Caco-2 (cell line): ENCODE measurements at regions of chr13 and their contacts with region 1.

Region 1: GRCh38 chr13:73708393-73708985 is 425.7 kb downstream of the KLF12 start:
- DNase-seq: peak; percentile 65 to 75
- H3K4me3 ChIP-seq: no peak overlapping the region
- H3K4me3 Mint-ChIP-seq: no peak overlapping the region
- H3K27ac Mint-ChIP-seq: no peak overlapping the region
- H3K4me1 ChIP-seq: no peaks in the 10 kb centered on the region
- H3K4me1 Mint-ChIP-seq: no peaks in the 10 kb centered on the region
- H3K27me3 ChIP-seq: no peaks in the 10 kb centered on the region
- H3K27me3 Mint-ChIP-seq: no peaks in the 10 kb centered on the region
- CTCF ChIP-seq: peak; percentile 82 to 94

Region 2: DNA sequence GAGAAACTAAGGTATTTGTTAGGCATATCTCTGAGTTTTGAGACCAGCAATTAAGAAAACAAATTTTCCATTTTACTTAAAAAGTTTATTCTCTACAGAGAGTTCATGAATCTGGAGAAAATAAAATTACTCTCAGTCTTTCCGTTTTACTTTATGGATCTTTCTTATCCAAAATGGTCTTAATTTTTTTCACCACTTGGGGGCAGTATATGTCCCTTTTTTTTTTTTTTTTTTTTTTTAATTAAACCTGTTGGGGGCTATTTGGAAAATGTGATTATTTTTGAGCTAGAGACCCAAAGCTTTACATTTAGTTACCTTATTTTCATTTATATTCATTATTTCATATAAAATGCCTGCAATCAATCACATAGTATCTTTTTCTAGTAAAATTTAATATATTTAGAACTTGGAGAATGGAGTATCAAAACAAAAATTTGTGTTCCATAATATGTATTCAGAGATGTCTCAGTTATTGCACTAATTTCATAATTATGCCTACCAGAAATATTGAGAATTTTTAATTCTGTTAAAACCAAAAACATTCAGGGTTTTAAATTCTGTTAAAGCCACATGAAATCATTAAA is 899.5 kb before region 1 on chr13:
- CTCF ChIA-PET with region 1: no interaction called
- POLR2A ChIA-PET with region 1: no interaction called
- intact Hi-C with region 1: loop called (anchors 1 kb)
- DNase-seq: no peak
- H3K4me3 ChIP-seq: no peak overlapping the region
- H3K4me3 Mint-ChIP-seq: no peak overlapping the region
- H3K27ac Mint-ChIP-seq: no peak overlapping the region
- H3K4me1 ChIP-seq: peaks cover 16% of the 10 kb centered on the region
- H3K4me1 Mint-ChIP-seq: peaks cover 7% of the 10 kb centered on the region
- H3K27me3 ChIP-seq: no peaks in the 10 kb centered on the region
- H3K27me3 Mint-ChIP-seq: no peaks in the 10 kb centered on the region
- CTCF ChIP-seq: peak; percentile 50 to 66

Region 3: DNA sequence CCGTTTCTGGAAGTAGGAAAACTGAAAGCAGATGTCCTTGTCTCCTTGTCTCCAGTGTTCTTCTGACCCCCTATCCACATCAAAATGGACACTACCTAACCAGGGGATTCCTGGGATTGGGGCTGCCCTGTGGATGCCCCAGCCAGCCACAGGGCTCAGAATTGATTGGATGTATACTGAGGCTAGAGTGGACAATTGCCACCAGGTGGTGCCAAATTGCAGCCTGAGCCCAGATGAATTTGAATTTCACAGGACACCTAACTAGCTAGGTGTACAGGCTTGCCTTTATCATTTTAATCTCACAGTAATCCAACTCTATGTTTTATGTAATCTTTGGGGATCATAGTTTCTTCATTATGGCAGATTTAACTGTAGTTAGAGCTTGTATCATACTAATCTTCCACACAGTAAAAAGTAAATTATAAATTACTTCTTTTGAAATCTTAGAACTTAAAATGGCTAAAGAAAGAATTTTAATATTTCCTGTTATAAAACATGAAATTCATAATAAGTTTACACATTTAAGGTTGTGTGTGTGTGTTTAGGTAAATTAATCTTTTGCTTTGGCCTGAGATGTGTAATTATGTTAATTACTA is 868.6 kb before region 1 on chr13:
- CTCF ChIA-PET with region 1: no interaction called
- POLR2A ChIA-PET with region 1: no interaction called
- intact Hi-C with region 1: loop called (anchors 1 kb)
- DNase-seq: peak; percentile 77 to 80
- H3K4me3 ChIP-seq: no peak overlapping the region
- H3K4me3 Mint-ChIP-seq: no peak overlapping the region
- H3K27ac Mint-ChIP-seq: no peak overlapping the region
- H3K4me1 ChIP-seq: no peaks in the 10 kb centered on the region; the same call in 1 of the 2 replicates
- H3K4me1 Mint-ChIP-seq: no peaks in the 10 kb centered on the region
- H3K27me3 ChIP-seq: no peaks in the 10 kb centered on the region
- H3K27me3 Mint-ChIP-seq: no peaks in the 10 kb centered on the region
- CTCF ChIP-seq: peak; percentile 89 to 90

Region 4: DNA sequence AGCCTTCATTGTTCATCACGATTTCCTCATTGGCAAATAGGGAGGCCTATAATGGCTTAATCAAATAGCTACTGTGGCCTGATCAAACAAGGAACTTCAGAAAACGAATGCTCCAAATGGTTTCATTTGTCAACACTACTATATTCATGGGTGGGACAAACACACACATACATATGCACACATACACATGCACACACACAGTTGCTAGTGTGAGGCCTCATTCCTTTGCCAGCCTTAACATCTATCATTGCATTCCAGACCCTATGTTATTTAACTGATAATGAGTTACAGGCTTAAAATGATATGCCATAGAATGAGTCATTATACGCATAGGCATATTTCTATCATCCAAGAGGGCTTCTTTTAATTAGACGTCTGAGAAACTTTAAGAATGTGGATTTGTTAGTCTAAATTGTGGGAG is 509.5 kb before region 1 on chr13:
- CTCF ChIA-PET with region 1: no interaction called
- POLR2A ChIA-PET with region 1: no interaction called
- intact Hi-C with region 1: loop called (anchors 10 kb)
- DNase-seq: no peak
- H3K4me3 ChIP-seq: no peak overlapping the region
- H3K4me3 Mint-ChIP-seq: no peak overlapping the region
- H3K27ac Mint-ChIP-seq: no peak overlapping the region
- H3K4me1 ChIP-seq: peaks cover 27% of the 10 kb centered on the region
- H3K4me1 Mint-ChIP-seq: peaks cover 11% of the 10 kb centered on the region
- H3K27me3 ChIP-seq: no peaks in the 10 kb centered on the region
- H3K27me3 Mint-ChIP-seq: no peaks in the 10 kb centered on the region
- CTCF ChIP-seq: no peak

Region 5: GRCh38 chr13:73223372-73223781 is 485.1 kb before region 1 on chr13:
- CTCF ChIA-PET with region 1: no interaction called
- POLR2A ChIA-PET with region 1: no interaction called
- intact Hi-C with region 1: loop called (anchors 10 kb)
- DNase-seq: peak in 1 of 2 experiments; percentile 12
- H3K4me3 ChIP-seq: no peak overlapping the region
- H3K4me3 Mint-ChIP-seq: no peak overlapping the region
- H3K27ac Mint-ChIP-seq: peak overlapping the region; percentile 62
- H3K4me1 ChIP-seq: peaks cover 34% of the 10 kb centered on the region
- H3K4me1 Mint-ChIP-seq: peaks cover 44% of the 10 kb centered on the region
- H3K27me3 ChIP-seq: no peaks in the 10 kb centered on the region
- H3K27me3 Mint-ChIP-seq: no peaks in the 10 kb centered on the region
- CTCF ChIP-seq: no peak

Region 6: DNA sequence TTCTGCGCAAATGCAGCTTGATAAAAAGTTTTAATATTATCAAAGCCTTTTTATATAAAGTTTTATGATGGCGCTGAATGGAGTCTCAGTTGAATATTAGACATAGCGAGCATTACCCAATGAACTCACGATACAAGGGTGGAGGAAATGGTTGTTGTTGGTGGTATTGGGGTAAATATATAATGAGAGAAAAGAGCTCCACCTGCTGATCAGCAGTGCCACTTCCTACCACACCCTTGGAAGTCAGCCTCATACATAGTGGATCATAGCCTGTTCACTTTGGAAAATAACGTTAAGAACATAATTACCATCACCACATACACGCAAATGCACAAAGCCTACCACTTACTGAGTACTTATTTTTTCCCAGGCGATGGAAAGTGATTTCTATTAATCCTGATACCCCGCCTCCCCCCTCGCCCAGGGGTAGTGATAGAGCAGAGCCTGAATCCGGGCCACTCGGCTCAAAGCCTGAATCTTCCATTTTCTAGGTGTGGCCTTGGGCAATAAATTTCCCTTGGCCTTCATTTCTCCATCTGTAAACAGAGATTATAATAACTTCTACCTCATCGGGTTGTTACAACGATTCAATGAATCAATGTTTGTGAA is 291.4 kb before region 1 on chr13:
- CTCF ChIA-PET with region 1: no interaction called
- POLR2A ChIA-PET with region 1: no interaction called
- intact Hi-C with region 1: loop called (anchors 2 kb)
- DNase-seq: peak in 1 of 2 experiments; percentile 55
- H3K4me3 ChIP-seq: no peak overlapping the region
- H3K4me3 Mint-ChIP-seq: no peak overlapping the region
- H3K27ac Mint-ChIP-seq: no peak overlapping the region
- H3K4me1 ChIP-seq: peaks cover 19% of the 10 kb centered on the region
- H3K4me1 Mint-ChIP-seq: peaks cover 15% of the 10 kb centered on the region
- H3K27me3 ChIP-seq: no peaks in the 10 kb centered on the region
- H3K27me3 Mint-ChIP-seq: no peaks in the 10 kb centered on the region
- CTCF ChIP-seq: peak; percentile 38 to 45

Region 7: GRCh38 chr13:73544175-73544574 is 164.3 kb before region 1 on chr13:
- CTCF ChIA-PET with region 1: no interaction called
- POLR2A ChIA-PET with region 1: no interaction called
- intact Hi-C with region 1: loop called (anchors 5 kb)
- DNase-seq: no peak
- H3K4me3 ChIP-seq: no peak overlapping the region
- H3K4me3 Mint-ChIP-seq: no peak overlapping the region
- H3K27ac Mint-ChIP-seq: no peak overlapping the region
- H3K4me1 ChIP-seq: no peaks in the 10 kb centered on the region
- H3K4me1 Mint-ChIP-seq: no peaks in the 10 kb centered on the region
- H3K27me3 ChIP-seq: no peaks in the 10 kb centered on the region
- H3K27me3 Mint-ChIP-seq: no peaks in the 10 kb centered on the region
- CTCF ChIP-seq: no peak

Region 8: GRCh38 chr13:73657821-73658540 is 50.5 kb before region 1 on chr13:
- CTCF ChIA-PET with region 1: no interaction called
- POLR2A ChIA-PET with region 1: no interaction called
- intact Hi-C with region 1: no loop called
- DNase-seq: no peak
- H3K4me3 ChIP-seq: no peak overlapping the region
- H3K4me3 Mint-ChIP-seq: no peak overlapping the region
- H3K27ac Mint-ChIP-seq: no peak overlapping the region
- H3K4me1 ChIP-seq: no peaks in the 10 kb centered on the region
- H3K4me1 Mint-ChIP-seq: peaks cover 5% of the 10 kb centered on the region
- H3K27me3 ChIP-seq: no peaks in the 10 kb centered on the region
- H3K27me3 Mint-ChIP-seq: no peaks in the 10 kb centered on the region
- CTCF ChIP-seq: no peak

Region 9: DNA sequence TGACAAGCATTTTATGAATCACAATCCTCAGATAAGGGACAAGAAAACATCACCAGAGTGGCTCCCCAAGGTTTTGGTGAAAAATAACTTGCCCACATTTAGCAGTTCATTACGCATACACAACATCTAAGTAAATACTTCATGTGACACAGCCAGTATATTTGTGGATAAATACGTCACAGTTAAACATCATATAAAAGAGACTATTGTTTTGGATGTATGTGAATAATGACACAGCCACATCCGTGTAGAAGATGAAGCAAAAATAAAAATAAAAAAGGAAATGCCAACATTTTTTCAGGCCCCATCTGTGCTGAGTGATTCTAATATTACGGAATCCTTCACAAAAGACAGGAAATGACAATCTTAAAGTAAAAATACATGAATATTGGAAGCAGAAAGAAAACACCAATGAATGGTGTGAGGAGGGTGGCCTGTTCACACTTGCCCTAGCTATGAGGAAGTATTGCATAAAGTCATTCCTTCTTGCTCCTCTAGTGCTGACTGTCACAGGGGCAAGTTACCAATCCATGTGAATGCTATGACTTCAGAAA is 31.4 kb before region 1 on chr13:
- CTCF ChIA-PET with region 1: no interaction called
- POLR2A ChIA-PET with region 1: no interaction called
- intact Hi-C with region 1: no loop called
- DNase-seq: peak in 1 of 2 experiments; percentile 77
- H3K4me3 ChIP-seq: no peak overlapping the region
- H3K4me3 Mint-ChIP-seq: no peak overlapping the region
- H3K27ac Mint-ChIP-seq: peak overlapping the region; percentile 69
- H3K4me1 ChIP-seq: peaks cover 53% of the 10 kb centered on the region
- H3K4me1 Mint-ChIP-seq: peaks cover 23% of the 10 kb centered on the region
- H3K27me3 ChIP-seq: no peaks in the 10 kb centered on the region
- H3K27me3 Mint-ChIP-seq: no peaks in the 10 kb centered on the region
- CTCF ChIP-seq: no peak